ENCODE measurements at regions of chr3 and their contacts with region 1.

Region 1: DNA sequence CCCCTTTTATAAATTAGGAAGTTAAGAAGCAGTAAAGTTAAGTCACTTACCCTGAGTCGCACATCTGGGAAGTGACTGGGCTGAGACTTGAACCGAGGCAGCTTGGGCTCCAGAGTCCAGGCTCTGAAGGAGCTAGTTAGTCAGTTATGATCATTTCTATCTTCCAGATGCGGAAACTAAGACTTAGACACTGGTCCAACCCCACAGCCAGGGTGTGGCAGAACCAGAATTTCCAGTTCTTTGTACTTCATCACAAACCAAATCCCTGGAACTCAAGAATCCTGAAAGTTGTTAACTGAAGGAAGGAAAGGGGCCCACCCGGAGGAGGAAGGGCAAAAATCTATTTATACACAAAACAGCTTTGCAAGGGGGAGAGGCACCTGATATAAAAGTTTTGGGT is 389.9 kb downstream of the SHQ1 start:
- DNase-seq: no peak
- ATAC-seq: no peak
- H3K4me3 ChIP-seq: no peak overlapping the region
- H3K27ac ChIP-seq: no peak overlapping the region
- H3K4me1 ChIP-seq: peaks cover 17 to 26% of the 10 kb centered on the region in 2 experiments
- H3K27me3 ChIP-seq: no peaks in the 10 kb centered on the region
- CTCF ChIP-seq: no peak
- POLR2A ChIP-seq: no peak
- RAD21 ChIP-seq: no peak

Region 2: DNA sequence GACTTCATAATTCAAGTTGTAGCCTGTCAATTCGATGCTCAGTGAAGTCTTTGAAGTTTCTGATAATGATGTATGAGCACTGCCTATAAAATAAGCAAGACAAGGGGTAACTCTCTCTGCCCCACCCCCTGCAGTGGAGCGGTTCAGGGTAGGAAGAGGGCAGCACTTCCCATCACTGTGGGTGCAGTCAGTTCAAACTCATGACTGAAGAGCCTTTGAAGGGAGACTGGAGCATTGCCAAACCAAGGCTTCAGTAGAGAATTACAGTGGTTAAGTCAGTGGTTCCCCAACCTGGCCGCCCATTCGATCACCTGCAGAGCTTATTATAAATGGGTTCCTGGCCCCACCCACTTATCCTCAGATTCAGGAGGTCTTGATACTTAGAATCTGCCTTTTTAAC is 199.3 kb after region 1 on chr3:
- CTCF ChIA-PET with region 1: no interaction called
- POLR2A ChIA-PET with region 1: no interaction called
- RAD21 ChIA-PET with region 1: no interaction called
- intact Hi-C with region 1: loop called (anchors 10 kb)
- DNase-seq: no peak
- ATAC-seq: peak; percentile 58
- H3K4me3 ChIP-seq: no peak overlapping the region
- H3K27ac ChIP-seq: no peak overlapping the region
- H3K4me1 ChIP-seq: peaks cover 27 to 31% of the 10 kb centered on the region in 2 experiments
- H3K27me3 ChIP-seq: peaks cover 5% of the 10 kb centered on the region; the same call in 1 of the 2 replicates
- CTCF ChIP-seq: no peak
- POLR2A ChIP-seq: no peak
- RAD21 ChIP-seq: no peak

Measured in HCT116 (cell line).